ENCODE measurements at regions of chr15 and their contacts with region 1.

Region 1: DNA sequence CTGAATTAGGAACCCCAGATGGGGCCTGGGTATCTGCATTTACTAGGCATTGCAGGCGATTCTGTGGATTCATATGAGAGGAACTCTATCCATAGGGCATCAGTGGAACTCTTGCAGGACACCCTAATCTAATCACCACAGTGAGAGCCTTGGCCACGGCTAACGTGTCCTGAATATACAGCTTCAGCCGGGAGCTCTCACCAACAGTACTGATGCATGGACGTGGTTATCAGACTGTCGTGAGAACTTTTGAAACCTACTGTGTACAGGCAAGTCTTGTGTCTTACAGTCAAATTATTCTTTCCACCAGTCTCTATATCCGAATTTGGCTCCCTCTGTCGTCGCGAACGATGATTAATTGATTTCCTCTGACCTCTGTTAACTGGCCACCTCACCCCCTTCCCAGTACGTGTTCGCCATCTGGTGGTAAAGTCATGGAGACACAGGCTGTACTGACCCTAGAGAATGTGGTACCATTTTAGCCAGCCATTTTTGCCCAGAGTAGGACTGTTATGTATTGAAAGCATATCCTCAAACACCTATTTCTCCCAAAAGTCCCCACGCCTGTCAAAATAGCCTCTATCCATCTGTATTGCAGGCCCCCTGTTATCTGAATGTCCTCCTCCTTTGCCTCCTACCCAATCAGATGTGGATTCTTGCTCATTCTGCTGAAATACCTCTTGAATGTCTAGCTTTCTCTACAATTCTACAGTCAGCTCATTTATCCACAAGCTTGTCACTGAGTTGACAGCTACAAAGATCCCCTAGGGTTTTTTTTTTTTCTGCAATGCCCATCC is 39.7 kb downstream of the GLDN start:
- DNase-seq: peak; percentile 87
- H3K4me3 ChIP-seq: no peak overlapping the region
- H3K27ac ChIP-seq: no peak overlapping the region
- H3K4me1 ChIP-seq: peaks cover 12% of the 10 kb centered on the region
- H3K27me3 ChIP-seq: no peaks in the 10 kb centered on the region

Region 2: GRCh38 chr15:50945725-50946124 is 435.5 kb before region 1 on chr15:
- in situ Hi-C with region 1: loop called (anchors 25 kb)
- DNase-seq: peak; percentile 31
- H3K4me3 ChIP-seq: no peak overlapping the region
- H3K27ac ChIP-seq: no peak overlapping the region
- H3K4me1 ChIP-seq: peaks cover 7% of the 10 kb centered on the region
- H3K27me3 ChIP-seq: no peaks in the 10 kb centered on the region

Region 3: GRCh38 chr15:51162865-51163762 is 218.1 kb before region 1 on chr15:
- in situ Hi-C with region 1: loop called (anchors 10 kb)
- DNase-seq: peak; percentile 87
- H3K4me3 ChIP-seq: peak overlapping the region; percentile 62
- H3K27ac ChIP-seq: no peak overlapping the region
- H3K4me1 ChIP-seq: 0 out of 2 replicates have a peak, but pooled peaks cover 4% of the 10 kb centered on the region
- H3K27me3 ChIP-seq: no peaks in the 10 kb centered on the region

Region 4: DNA sequence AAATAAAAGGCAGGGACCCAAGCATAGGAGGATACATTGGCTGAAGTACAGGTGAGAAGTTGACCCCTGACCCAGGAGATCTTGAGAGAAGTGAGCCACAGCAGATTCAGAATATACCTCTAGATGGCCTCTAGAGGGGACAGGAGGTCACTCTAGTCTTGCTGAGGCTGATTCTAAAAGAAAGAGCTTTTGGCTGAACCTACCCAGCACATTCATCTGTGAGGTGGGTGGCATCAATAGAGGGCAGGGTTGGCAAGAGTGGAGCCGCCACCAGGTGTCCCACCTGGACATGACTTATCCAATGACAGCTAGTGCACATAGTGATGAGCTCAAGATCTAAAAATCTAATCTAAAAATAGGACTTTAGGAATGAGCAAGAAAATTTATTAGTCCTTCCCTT is 94.4 kb before region 1 on chr15:
- in situ Hi-C with region 1: loop called (anchors 5 kb)
- DNase-seq: no peak
- H3K4me3 ChIP-seq: no peak overlapping the region
- H3K27ac ChIP-seq: no peak overlapping the region
- H3K4me1 ChIP-seq: peaks cover 3% of the 10 kb centered on the region; the same call in 1 of the 2 replicates
- H3K27me3 ChIP-seq: no peaks in the 10 kb centered on the region

Region 5: DNA sequence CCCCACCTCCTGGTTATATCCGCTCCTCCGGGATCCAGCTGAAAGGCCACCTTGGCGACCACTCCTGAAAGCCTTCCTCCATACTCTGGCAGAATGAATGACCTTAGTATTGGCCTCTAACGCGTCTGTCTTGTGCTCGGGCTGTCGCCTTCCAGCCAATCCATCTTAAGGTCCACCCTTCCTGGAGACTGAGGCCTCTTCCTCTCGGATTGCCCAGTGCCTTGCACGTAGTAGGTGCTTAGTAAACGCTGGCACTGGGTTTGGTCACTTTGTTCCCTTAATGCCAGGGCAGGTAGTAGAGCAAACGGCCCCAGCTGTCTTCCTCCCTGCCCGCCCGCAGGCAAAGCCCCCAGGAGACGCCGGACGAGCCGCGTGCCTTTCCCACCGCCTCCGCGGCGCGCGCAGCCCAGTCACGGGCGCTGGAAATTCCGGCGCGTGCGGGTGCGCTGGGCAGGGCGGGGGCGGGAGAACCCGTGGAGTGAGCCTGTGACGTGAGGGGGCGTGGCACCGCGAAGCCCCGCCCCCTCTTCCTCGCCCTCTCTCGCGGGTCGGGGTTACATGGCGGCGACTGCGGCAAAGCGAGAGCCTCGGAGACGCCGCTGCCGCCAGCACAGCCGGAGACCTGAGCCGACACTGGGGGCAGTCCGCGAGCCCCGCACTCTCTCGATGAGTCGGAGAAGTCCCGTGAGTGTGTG is 637.6 kb after region 1 on chr15 and contains the start of gene MAPK6:
- in situ Hi-C with region 1: no loop called
- DNase-seq: peak; percentile 97
- H3K4me3 ChIP-seq: peak within 1 kb of the TSS; percentile 100
- H3K27ac ChIP-seq: peak within 1 kb of the TSS; percentile 100
- H3K4me1 ChIP-seq: peaks cover 21% of the 10 kb centered on the region
- H3K27me3 ChIP-seq: no peaks in the 10 kb centered on the region
- total RNA-seq, gene MAPK6: 55.4 and 69.3 TPM in 2 replicates